ENCODE measurements at regions of chr2 and their contacts with region 1.

Region 1: GRCh38 chr2:172467382-172467781 is 40.0 kb downstream of the ITGA6 start:
- DNase-seq: no peak
- H3K27ac ChIP-seq: peak overlapping the region; percentile 44; the same call in 1 of the 2 replicates
- CTCF ChIP-seq: no peak

Region 2: DNA sequence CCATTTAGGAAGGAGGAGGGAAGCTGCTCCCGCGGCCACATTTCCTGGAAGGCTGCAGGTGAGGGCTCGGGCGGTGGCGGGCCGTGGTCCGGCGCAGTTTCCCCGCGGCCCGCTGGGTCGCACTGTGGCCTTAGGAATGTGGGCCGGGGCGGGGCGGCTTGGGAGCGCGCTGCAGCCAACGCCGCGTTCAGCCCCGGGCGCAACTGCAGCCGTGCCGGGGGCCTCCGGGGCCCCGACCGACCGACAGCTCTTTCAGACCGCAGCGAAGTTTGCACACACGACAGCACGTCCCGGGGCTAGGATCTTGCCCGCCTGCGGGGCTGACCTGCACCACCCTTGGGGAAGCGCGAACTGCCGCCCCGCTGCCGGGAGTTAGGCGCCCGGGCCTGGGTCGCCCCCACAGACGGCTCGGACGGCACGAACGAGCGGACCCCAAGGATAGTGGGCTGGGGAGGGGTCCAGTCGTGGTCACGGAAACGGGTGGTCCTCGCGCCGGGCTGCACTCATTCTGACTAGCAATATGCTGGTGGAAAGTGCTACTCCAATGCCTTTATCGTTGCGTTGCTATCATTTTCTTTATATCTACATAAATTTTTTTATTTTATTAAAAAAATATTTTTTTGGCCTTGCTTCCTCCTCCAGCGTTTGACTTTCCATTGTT is 294.7 kb before region 1 on chr2:
- CTCF ChIA-PET with region 1: interaction called, 23 read pairs
- POLR2A ChIA-PET with region 1: no interaction called
- DNase-seq: peak; percentile 82
- H3K27ac ChIP-seq: peak overlapping the region; percentile 84
- CTCF ChIP-seq: peak; percentile 89

Region 3: GRCh38 chr2:172305066-172305465 is 162.3 kb before region 1 on chr2:
- CTCF ChIA-PET with region 1: no interaction called
- POLR2A ChIA-PET with region 1: no interaction called
- DNase-seq: no peak
- H3K27ac ChIP-seq: no peak overlapping the region
- CTCF ChIP-seq: no peak